ENCODE measurements at regions of chr4 and their contacts with region 1.

Region 1: GRCh38 chr4:18689308-18690115 is 668.0 kb upstream of the LCORL start:
- DNase-seq: no peak
- ATAC-seq: peak; percentile 63
- H3K4me3 ChIP-seq: no peak overlapping the region
- H3K27ac ChIP-seq: no peak overlapping the region
- H3K4me1 ChIP-seq: no peaks in the 10 kb centered on the region
- H3K27me3 ChIP-seq: no peaks in the 10 kb centered on the region
- CTCF ChIP-seq: peak; percentile 70 to 76 (median 74)
- EP300 ChIP-seq: no peak
- POLR2A ChIP-seq: no peak
- RAD21 ChIP-seq: peak; percentile 92

Region 2: DNA sequence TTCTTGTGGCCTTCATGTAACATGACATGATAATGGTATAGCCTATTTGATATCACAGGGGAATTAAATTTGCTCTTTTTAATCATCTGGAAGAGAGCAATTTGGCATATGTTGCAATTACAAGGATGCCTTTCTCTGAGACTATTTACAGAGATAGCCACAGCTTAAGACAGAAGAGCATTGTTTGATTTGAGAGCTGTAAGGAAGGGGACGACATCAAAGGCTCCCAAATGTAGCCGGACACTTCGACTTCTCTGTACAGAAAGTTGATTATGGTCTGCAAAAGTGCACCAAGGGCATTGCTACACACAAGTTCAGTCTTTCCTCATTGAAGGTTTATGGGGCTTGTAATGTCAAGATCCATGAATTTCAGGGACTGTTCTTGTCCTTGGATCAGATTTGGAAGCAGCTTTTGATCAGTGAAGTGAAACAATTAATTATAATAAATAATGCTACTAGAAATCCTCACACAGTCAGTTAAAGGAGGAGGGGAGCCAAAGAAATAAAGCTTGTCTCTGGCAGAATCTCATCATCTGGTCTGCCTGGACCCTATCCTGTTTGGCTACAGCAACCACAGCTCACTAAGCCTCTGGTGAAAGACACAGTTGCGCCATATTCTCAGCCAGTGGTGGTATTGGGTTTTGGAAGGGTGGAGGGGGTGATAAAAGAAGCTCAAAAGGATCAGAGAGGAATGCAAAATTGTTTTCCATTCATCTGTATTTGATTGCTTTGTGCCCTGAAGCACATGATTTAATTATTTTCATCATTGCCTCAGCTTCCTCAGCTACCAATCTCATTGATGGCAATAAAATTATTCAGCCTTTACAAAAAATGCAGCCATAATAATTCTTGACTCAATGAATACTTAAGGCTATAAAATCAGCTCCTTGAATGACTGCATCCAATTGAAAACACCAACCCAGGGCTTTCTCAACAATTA is 13.7 kb before region 1 on chr4:
- CTCF ChIA-PET with region 1: no interaction called
- POLR2A ChIA-PET with region 1: no interaction called
- RAD21 ChIA-PET with region 1: no interaction called
- SMC1A ChIA-PET with region 1: no interaction called
- in situ Hi-C with region 1: no loop called
- intact Hi-C with region 1: no loop called
- DNase-seq: no peak
- ATAC-seq: no peak
- H3K4me3 ChIP-seq: no peak overlapping the region
- H3K27ac ChIP-seq: no peak overlapping the region
- H3K4me1 ChIP-seq: no peaks in the 10 kb centered on the region
- H3K27me3 ChIP-seq: no peaks in the 10 kb centered on the region
- CTCF ChIP-seq: no peak
- EP300 ChIP-seq: no peak
- POLR2A ChIP-seq: no peak
- RAD21 ChIP-seq: no peak

Region 3: DNA sequence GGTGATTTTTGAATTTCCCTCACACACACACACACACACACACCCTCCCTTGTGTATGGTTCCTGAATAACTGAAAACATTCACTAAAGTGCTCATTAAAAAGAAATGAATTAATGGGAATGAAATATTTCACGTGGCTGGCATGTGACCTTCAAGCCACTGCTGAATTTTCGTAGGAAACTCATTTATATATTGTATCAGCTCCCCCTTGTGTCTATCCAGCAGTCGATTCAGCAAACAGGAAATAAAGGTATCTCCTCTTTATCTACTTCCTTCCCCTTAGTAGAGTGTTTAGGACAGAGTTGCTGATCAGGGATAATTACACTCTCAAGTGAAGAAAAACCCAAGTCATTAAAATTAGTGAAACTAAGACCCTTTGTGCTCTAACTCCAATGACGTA is 244.7 kb after region 1 on chr4:
- CTCF ChIA-PET with region 1: no interaction called
- POLR2A ChIA-PET with region 1: no interaction called
- RAD21 ChIA-PET with region 1: no interaction called
- SMC1A ChIA-PET with region 1: no interaction called
- in situ Hi-C with region 1: no loop called
- intact Hi-C with region 1: loop called (anchors 2 kb)
- DNase-seq: no peak
- ATAC-seq: no peak
- H3K4me3 ChIP-seq: no peak overlapping the region
- H3K27ac ChIP-seq: no peak overlapping the region
- H3K4me1 ChIP-seq: no peaks in the 10 kb centered on the region
- H3K27me3 ChIP-seq: no peaks in the 10 kb centered on the region
- CTCF ChIP-seq: no peak
- EP300 ChIP-seq: no peak
- POLR2A ChIP-seq: no peak
- RAD21 ChIP-seq: no peak

Region 4: DNA sequence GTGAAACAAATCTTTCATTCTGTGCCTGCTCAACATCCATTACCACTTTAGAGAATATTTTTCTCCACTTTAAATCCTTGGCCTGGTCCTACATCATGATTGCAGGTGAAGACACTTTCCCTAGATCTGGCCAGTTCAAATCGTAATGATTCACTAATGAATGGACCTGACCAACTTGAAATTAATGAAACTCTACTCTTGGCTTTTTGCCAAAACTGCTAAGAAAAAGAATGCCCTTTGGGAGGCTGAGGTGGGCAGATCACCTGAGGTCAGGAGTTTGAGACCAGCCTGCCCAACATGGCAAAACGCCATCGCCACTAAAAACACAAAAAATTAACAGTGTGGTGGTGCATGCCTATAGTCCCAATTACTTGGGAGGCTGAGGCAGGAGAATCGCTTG is 414.7 kb after region 1 on chr4:
- CTCF ChIA-PET with region 1: no interaction called
- POLR2A ChIA-PET with region 1: no interaction called
- RAD21 ChIA-PET with region 1: no interaction called
- SMC1A ChIA-PET with region 1: no interaction called
- in situ Hi-C with region 1: no loop called
- intact Hi-C with region 1: no loop called
- DNase-seq: no peak
- ATAC-seq: no peak
- H3K4me3 ChIP-seq: no peak overlapping the region
- H3K27ac ChIP-seq: no peak overlapping the region
- H3K4me1 ChIP-seq: no peaks in the 10 kb centered on the region
- H3K27me3 ChIP-seq: no peaks in the 10 kb centered on the region
- CTCF ChIP-seq: no peak
- EP300 ChIP-seq: no peak
- POLR2A ChIP-seq: no peak
- RAD21 ChIP-seq: no peak

Region 5: GRCh38 chr4:19213388-19213787 is 523.9 kb after region 1 on chr4:
- CTCF ChIA-PET with region 1: no interaction called
- POLR2A ChIA-PET with region 1: no interaction called
- RAD21 ChIA-PET with region 1: no interaction called
- SMC1A ChIA-PET with region 1: no interaction called
- in situ Hi-C with region 1: no loop called
- intact Hi-C with region 1: loop called (anchors 10 kb)
- DNase-seq: no peak
- ATAC-seq: no peak
- H3K4me3 ChIP-seq: no peak overlapping the region
- H3K27ac ChIP-seq: no peak overlapping the region
- H3K4me1 ChIP-seq: no peaks in the 10 kb centered on the region
- H3K27me3 ChIP-seq: no peaks in the 10 kb centered on the region
- CTCF ChIP-seq: no peak
- EP300 ChIP-seq: no peak
- POLR2A ChIP-seq: no peak
- RAD21 ChIP-seq: no peak

Region 6: DNA sequence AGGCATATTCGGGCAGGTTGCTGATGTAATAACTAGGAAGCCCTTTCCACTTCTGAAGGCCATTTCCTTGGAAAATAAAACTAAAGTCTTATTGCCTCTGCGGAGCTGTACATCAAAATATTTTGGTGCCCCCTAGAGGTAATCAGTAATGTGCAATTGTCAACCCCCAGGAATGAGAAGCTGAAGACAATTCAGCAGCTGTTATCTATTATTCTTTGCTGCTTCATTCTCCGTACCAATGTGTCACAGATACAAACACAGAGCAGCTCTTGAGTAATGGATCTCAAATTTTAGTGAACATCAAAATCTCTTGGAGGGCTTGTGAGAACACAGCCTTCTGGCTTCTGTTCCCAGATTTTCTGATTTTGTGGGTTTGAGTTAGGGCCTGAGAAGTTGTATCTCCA is 1558.6 kb after region 1 on chr4:
- CTCF ChIA-PET with region 1: interaction called, 3 read pairs
- POLR2A ChIA-PET with region 1: no interaction called
- RAD21 ChIA-PET with region 1: no interaction called
- SMC1A ChIA-PET with region 1: no interaction called
- in situ Hi-C with region 1: loop called (anchors 25 kb)
- intact Hi-C with region 1: loop called (anchors 2 kb)
- DNase-seq: no peak
- ATAC-seq: peak; percentile 66
- H3K4me3 ChIP-seq: no peak overlapping the region
- H3K27ac ChIP-seq: no peak overlapping the region
- H3K4me1 ChIP-seq: no peaks in the 10 kb centered on the region
- H3K27me3 ChIP-seq: peaks cover 2 to 5% of the 10 kb centered on the region in 2 experiments; a peak in 2 of 4 replicates
- CTCF ChIP-seq: peak; percentile 44 to 50 (median 47)
- EP300 ChIP-seq: no peak
- POLR2A ChIP-seq: no peak
- RAD21 ChIP-seq: peak; percentile 54

Measured in GM12878 (cell line).